CD8-positive, alpha-beta memory T cell (primary cell): ENCODE measurements at regions of chr19 and their contacts with region 1.

Region 1: GRCh38 chr19:41206926-41207750 is 11.9 kb upstream of the AXL start:
- DNase-seq: no peak
- H3K4me3 ChIP-seq: no peak overlapping the region
- H3K4me3 Mint-ChIP-seq: no peak overlapping the region
- H3K27ac ChIP-seq: no peak overlapping the region
- H3K27ac Mint-ChIP-seq: peak overlapping the region in 5 of 8 donors; percentile 54 to 96 (median 75)
- H3K4me1 ChIP-seq: no peaks in the 10 kb centered on the region
- H3K4me1 Mint-ChIP-seq: peaks cover 3 to 5% (median 4%) of the 10 kb centered on the region in 3 donors
- H3K27me3 ChIP-seq: no peaks in the 10 kb centered on the region
- H3K27me3 Mint-ChIP-seq: peaks cover 2 to 3% of the 10 kb centered on the region in 2 donors

Region 2: GRCh38 chr19:41095703-41096102 is 111.4 kb before region 1 on chr19:
- CTCF ChIA-PET with region 1: no interaction called
- POLR2A ChIA-PET with region 1: no interaction called
- DNase-seq: no peak
- H3K4me3 ChIP-seq: no peak overlapping the region
- H3K4me3 Mint-ChIP-seq: no peak overlapping the region
- H3K27ac ChIP-seq: no peak overlapping the region
- H3K27ac Mint-ChIP-seq: no peak overlapping the region
- H3K4me1 ChIP-seq: no peaks in the 10 kb centered on the region
- H3K4me1 Mint-ChIP-seq: peaks cover 3 to 11% (median 3%) of the 10 kb centered on the region in 3 donors
- H3K27me3 ChIP-seq: peaks cover 7% of the 10 kb centered on the region
- H3K27me3 Mint-ChIP-seq: peaks cover 36 to 57% of the 10 kb centered on the region in 2 donors

Region 3: DNA sequence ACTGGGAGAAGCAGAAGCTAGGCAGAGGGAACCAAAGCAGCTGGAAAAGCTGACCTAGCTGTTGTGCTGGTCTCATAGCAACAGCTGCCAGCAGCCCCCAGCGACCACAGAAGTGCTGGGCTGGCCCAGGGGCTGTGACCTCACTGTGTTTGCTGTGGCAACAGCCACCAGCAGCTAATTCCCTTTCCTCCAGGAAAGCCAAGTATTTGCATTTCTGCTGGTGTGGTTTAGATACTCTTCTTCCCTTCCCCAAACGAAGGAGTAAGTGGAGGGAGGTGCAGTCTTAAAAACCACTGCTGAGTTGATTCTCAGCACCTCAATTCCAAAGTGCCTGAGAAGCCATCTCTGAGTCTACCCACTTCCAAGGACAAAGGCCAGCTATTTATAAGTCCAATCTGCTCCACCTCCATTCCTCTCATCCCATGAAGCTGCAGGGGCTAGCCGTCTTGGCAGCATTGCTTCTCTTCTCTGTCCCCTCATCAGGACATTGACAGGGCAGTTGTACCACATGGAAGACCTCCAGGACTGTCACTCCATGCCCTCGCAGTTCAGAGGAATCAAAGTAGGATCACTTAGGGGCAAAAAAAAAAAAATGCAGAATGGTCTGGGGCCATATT is 91.3 kb after region 1 on chr19:
- CTCF ChIA-PET with region 1: interaction called, 82 read pairs
- POLR2A ChIA-PET with region 1: no interaction called
- DNase-seq: peak; percentile 45 to 78 (median 56)
- H3K4me3 ChIP-seq: no peak overlapping the region
- H3K4me3 Mint-ChIP-seq: peak overlapping the region; percentile 37 to 67 (median 64)
- H3K27ac ChIP-seq: peak overlapping the region; percentile 68
- H3K27ac Mint-ChIP-seq: peak overlapping the region; percentile 96 to 100 (median 98)
- H3K4me1 ChIP-seq: peaks cover 77% of the 10 kb centered on the region
- H3K4me1 Mint-ChIP-seq: peaks cover 80 to 93% (median 90%) of the 10 kb centered on the region in 3 donors
- H3K27me3 ChIP-seq: no peaks in the 10 kb centered on the region
- H3K27me3 Mint-ChIP-seq: no peaks in the 10 kb centered on the region

Region 4: GRCh38 chr19:41310033-41310758 is 103.1 kb after region 1 on chr19 and contains the start of gene CCDC97:
- CTCF ChIA-PET with region 1: interaction called, 82 read pairs
- POLR2A ChIA-PET with region 1: interaction called, 9 read pairs
- DNase-seq: peak; percentile 81 to 94 (median 89)
- H3K4me3 ChIP-seq: peak within 1 kb of the TSS; percentile 93
- H3K4me3 Mint-ChIP-seq: peak within 1 kb of the TSS; percentile 94 to 100 (median 98)
- H3K27ac ChIP-seq: peak within 1 kb of the TSS; percentile 90
- H3K27ac Mint-ChIP-seq: peak within 1 kb of the TSS; percentile 93 to 100 (median 98)
- H3K4me1 ChIP-seq: peaks cover 60% of the 10 kb centered on the region
- H3K4me1 Mint-ChIP-seq: peaks cover 68 to 93% (median 87%) of the 10 kb centered on the region in 3 donors
- H3K27me3 ChIP-seq: no peaks in the 10 kb centered on the region
- H3K27me3 Mint-ChIP-seq: peaks cover 0 to 8% of the 10 kb centered on the region in 2 donors
- total RNA-seq, gene CCDC97: 31.7 to 32.1 TPM

Region 5: DNA sequence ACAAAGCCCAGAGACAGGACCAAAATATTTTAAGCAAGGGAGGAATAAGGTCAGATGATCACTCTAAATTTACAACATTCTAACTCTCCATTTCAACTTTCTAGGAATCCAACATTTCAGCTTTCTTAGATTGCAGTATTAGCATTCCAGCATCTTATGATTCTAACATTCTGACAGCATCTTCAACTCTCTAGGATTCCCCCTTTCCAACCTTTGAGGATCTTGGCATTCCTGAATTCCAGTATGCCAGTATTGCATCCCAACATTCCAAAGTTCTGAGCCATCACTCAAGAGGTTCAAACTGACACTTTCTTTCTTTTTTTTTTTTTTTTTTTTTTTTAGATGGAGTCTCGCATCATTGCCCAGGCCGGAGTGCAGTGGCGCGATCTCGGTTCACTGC is 132.8 kb after region 1 on chr19:
- CTCF ChIA-PET with region 1: no interaction called
- POLR2A ChIA-PET with region 1: interaction called, 10 read pairs
- DNase-seq: no peak
- H3K4me3 ChIP-seq: no peak overlapping the region
- H3K4me3 Mint-ChIP-seq: peak overlapping the region in 2 of 7 donors; percentile 60 to 65
- H3K27ac ChIP-seq: no peak overlapping the region
- H3K27ac Mint-ChIP-seq: peak overlapping the region in 5 of 8 donors; percentile 55 to 100 (median 82)
- H3K4me1 ChIP-seq: peaks cover 35% of the 10 kb centered on the region
- H3K4me1 Mint-ChIP-seq: peaks cover 43 to 59% (median 48%) of the 10 kb centered on the region in 3 donors
- H3K27me3 ChIP-seq: no peaks in the 10 kb centered on the region
- H3K27me3 Mint-ChIP-seq: no peaks in the 10 kb centered on the region